MCF 10A (cell line): ENCODE measurements at regions of chr20 and their contacts with region 1.

Region 1: DNA sequence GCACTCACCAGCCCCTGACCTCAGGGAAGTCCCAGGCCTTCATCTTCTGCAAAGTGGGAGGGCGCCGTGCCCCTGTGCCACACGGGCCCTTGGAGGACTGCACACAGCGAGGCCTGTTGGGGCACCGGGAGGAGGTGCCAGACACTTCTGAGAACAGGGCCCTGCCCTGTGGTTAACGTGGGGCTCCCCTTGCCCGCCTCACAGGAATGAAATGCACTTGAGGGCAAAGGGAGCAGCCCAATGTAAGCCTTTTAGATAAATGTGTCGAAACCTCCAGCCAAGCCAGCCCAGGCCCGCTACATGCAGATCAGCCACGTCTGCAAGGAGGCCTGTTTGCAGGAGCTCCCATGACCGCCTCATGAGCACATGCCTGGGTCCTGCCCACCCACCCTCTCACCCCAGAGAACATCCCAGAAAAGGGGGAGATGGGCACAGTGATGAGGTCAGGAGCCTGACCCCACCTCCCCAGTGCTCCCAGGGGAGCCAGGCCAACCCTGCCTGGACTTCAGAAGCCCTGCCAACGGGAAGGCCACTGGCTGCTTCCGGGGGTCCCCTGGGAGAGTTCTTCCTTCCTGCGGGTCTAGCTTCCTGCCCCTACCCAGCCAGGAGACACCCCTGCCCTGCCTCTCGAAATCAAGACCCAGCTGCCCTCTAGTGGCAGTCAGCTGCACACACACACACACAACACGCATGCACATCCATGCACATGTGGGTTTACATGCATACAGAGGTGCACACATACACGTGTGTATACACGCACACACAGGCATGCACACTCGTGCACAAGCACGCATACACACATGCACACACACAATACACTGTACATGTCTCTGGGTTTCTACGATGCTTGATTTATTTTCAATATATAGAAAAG is 178.7 kb downstream of the TAF4 start:
- DNase-seq: peak; percentile 25
- H3K4me3 Mint-ChIP-seq: no peak overlapping the region
- H3K27ac Mint-ChIP-seq: no peak overlapping the region
- H3K4me1 Mint-ChIP-seq: no peaks in the 10 kb centered on the region
- H3K27me3 Mint-ChIP-seq: peaks cover 7% of the 10 kb centered on the region
- CTCF ChIP-seq: peak; percentile 80

Region 2: DNA sequence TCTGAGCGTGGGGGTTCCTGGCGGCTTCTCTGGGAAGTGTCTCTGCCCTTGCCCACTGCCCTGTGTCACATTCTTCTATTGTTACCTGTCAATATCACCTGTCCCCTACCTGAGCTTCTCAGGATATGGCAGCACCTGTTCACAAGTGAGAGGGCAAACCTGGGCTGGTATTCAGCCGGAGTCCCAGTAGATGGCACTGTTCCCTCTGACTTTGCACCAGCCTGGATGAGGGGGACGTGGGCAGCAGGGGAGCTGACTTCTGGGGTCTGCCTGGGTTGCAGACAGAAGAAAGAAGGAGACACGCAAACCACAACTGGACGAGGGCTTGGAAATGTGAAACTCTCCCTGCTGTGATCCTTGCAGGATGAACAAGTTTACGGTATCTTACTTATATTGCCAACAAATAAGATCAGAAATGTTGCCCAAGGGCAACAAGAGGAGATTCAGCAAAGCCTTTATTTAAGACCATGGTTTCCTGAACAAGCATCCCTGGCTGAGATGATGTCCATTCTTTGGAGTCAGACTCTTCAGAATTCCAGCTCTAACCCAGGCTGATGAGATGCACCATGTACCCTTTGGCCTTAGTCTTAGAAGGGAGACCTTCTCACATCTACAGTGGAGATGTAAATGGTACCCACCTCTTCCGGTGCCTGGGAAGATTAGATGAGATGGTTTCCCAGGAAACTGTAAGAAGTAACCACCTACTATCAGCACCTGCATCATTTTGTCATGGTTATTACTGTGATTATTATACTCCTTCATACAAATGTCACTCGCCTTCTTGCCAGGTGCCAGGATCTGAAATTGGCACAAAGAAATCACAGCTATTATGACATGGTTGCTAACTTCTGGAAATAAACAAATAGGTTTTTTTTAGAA is 1034.9 kb before region 1 on chr20:
- CTCF ChIA-PET with region 1: interaction called, 5 read pairs
- POLR2A ChIA-PET with region 1: no interaction called
- intact Hi-C with region 1: loop called (anchors 10 kb)
- DNase-seq: peak; percentile 31
- H3K4me3 Mint-ChIP-seq: no peak overlapping the region
- H3K27ac Mint-ChIP-seq: no peak overlapping the region
- H3K4me1 Mint-ChIP-seq: no peaks in the 10 kb centered on the region
- H3K27me3 Mint-ChIP-seq: peaks cover 69% of the 10 kb centered on the region
- CTCF ChIP-seq: peak; percentile 79

Region 3: DNA sequence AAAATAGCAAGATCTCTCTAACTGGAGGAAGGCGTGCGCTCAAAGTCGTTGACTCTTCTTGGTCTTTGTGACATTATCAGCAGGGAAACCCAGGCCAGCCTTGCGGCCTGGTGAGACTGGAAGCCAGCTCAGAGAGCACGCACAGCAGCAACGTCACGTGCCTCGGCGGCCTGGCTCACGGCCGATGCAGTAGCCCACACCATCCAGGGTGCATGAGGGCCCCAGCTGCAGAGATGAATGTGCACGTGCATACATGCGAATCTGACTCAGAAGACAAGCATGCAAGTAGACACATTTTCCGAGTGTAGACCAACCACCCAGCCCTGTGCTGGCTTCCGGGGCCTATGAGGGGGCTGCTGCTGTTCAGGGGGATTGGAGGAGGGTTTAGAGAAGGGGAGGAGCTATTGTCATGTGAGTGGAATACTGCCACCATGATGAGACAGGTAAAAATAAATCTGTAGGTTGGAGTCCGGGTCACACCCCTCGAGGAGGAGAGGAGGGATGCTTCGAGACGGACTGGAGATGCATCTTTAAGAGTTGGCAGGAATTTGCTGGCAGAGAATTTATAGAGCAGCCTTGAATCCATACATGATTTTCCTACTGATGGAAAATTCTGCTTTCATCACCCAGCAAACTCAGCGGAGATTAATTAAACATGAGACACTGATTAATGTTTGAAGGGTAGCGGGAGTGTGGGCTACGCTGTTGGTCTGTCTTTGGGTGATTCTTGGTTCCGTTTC is 246.7 kb before region 1 on chr20:
- CTCF ChIA-PET with region 1: no interaction called
- POLR2A ChIA-PET with region 1: no interaction called
- intact Hi-C with region 1: no loop called
- DNase-seq: peak; percentile 18
- H3K4me3 Mint-ChIP-seq: no peak overlapping the region
- H3K27ac Mint-ChIP-seq: no peak overlapping the region
- H3K4me1 Mint-ChIP-seq: peaks cover 8% of the 10 kb centered on the region
- H3K27me3 Mint-ChIP-seq: no peaks in the 10 kb centered on the region
- CTCF ChIP-seq: no peak

Region 4: GRCh38 chr20:61874501-61875026 is 12.4 kb before region 1 on chr20:
- CTCF ChIA-PET with region 1: interaction called, 17 read pairs
- POLR2A ChIA-PET with region 1: no interaction called
- intact Hi-C with region 1: no loop called
- DNase-seq: peak; percentile 11
- H3K4me3 Mint-ChIP-seq: no peak overlapping the region
- H3K27ac Mint-ChIP-seq: no peak overlapping the region
- H3K4me1 Mint-ChIP-seq: no peaks in the 10 kb centered on the region
- H3K27me3 Mint-ChIP-seq: no peaks in the 10 kb centered on the region
- CTCF ChIP-seq: peak; percentile 30